ENCODE measurements at regions of chr2 and their contacts with region 1.

Region 1: DNA sequence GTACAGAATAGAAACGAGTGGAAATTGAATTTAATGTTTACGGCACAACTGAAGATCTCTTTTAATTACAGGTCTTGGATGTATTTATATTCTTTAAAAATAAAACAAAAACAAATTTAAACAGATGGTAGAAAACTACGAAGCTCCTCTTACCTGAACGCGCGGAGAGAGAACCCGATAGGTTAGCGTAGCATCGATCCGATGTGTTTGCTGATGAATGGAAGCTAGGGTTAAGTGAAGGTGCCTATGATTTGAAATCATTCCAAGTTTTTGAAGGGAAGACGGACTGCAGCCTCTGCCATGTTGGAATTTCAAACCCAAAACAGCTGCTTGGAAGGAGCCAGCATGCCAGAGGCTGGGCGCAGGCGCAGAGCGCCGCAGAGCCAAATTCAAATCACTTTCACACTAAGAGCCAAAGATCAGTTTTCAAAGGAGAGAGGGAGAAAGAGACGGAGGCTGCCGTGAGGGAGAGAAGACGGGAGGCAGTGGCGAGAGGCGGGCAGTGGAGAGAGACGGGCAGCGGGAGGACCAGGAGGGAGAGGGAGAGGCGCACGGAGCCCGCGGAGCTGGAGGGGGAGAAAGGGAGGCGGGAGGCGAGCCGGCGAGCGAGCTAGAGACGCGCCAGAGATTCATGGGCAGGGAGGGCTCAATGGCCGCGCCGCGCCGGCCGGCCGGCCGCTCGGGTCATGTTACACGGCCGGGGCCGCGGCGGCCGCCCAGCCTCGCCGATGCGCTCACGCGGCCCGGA is at the start of gene FIGN:
- DNase-seq: peak; percentile 85
- ATAC-seq: peak; percentile 88
- total RNA-seq, gene FIGN: 16.7 TPM

Region 2: GRCh38 chr2:163471947-163472346 is 263.9 kb before region 1 on chr2:
- intact Hi-C with region 1: loop called (anchors 2 kb)
- DNase-seq: no peak
- ATAC-seq: peak; percentile 62

Region 3: GRCh38 chr2:163505281-163505680 is 230.6 kb before region 1 on chr2:
- intact Hi-C with region 1: no loop called
- DNase-seq: no peak
- ATAC-seq: no peak

Region 4: GRCh38 chr2:163601377-163601776 is 134.5 kb before region 1 on chr2:
- intact Hi-C with region 1: loop called (anchors 5 kb)
- DNase-seq: no peak
- ATAC-seq: no peak

Region 5: DNA sequence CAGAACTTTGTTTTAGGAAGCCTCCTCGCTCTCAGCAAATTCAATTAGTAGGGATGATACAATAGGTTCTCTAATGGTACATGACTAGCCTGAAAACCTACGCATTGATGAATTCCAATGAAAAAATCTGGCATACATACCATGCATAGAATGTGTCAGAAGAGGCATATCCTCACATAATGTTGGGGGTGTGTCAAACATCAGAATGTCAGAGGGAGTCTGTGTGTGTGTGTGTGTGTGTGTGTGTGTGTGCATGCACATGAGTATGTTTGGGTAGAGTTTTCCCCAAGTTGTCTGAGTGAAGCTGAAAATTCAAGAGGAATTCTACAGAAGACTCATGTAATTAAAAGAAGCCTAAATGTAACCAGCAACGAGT is 78.6 kb before region 1 on chr2:
- intact Hi-C with region 1: loop called (anchors 5 kb)
- DNase-seq: no peak
- ATAC-seq: no peak

Region 6: GRCh38 chr2:163768881-163769695 is 33.2 kb after region 1 on chr2:
- intact Hi-C with region 1: no loop called
- DNase-seq: no peak
- ATAC-seq: no peak

Region 7: DNA sequence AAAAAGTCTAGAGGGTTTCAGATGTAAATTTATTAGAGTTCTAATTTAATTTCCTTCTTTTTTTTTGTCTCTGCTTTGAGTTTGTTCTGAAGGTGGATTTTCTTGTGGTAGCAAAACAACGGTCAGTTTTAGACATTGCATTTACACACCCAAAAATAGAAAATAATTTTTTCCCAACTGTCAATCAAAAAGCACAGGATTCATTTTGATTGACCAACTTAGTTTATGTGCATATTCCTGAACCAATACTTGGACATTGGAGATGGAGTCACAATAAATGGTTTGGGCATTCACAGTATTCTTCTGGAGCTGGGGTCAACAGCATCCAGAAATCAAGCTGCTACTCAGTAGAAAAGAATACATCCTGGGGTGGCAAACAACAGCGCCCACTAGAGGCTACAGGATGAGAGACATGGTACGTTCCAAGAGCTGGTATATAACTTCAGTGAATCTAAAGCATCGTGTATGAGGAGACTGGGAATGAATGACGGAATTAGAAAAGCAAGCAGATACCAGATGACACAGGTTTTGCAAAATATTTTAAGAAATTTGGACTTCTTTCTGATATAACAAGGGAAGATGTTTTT is 142.8 kb after region 1 on chr2:
- intact Hi-C with region 1: loop called (anchors 5 kb)
- DNase-seq: no peak
- ATAC-seq: no peak